Cardiac septum (tissue), 1 donor: ENCODE measurements at regions of chr11 and their contacts with region 1.

Region 1: GRCh38 chr11:130894322-130895025 is 21.8 kb downstream of the SNX19 start:
- DNase-seq: peak; percentile 82

Region 2: DNA sequence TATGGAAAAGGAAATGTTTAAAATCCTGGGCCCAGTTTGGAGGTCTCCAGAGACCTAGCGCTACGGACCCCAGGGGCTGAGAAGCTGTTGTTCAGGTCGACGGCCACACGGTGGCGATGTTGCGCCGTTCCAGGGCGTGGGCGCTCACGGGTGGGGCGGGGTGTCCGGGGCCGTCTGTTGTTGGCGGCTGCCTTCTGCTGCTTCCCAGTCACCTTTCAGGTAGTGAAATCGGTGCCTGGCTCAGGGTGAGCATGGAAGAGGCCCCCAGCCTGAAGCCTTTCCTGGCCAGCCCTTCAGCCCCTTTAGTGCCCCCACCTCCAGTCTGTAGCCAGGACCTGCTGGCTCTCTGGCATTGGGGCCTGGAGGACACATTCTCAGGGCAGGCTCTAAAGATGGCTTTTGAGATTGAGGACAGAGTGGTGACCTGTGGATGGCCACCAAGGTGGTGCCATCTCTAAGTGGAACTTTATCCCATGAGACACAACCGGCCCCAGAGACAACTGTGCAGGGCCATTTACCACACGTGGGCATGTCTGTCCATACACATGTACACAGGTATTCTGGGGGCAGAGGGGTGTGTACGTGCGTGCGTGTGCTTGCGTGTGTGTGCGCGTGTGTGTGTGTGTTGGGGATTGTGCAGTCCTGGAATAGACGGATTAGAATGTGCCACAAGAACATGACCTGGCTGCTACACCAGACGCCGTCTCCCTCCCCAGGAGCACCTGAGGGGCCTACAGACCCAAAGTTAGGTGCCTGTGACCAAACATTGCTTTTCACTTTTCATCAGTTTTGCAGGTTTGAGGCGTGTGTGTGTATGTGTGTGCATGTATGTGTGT is 681.1 kb before region 1 on chr11:
- intact Hi-C with region 1: loop called (anchors 10 kb)
- DNase-seq: peak; percentile 89

Region 3: GRCh38 chr11:130314750-130315285 is 579.7 kb before region 1 on chr11 and contains the start of gene ZBTB44:
- intact Hi-C with region 1: loop called (anchors 10 kb)
- DNase-seq: peak; percentile 98
- total RNA-seq, gene ZBTB44: 37.0 TPM

Region 4: DNA sequence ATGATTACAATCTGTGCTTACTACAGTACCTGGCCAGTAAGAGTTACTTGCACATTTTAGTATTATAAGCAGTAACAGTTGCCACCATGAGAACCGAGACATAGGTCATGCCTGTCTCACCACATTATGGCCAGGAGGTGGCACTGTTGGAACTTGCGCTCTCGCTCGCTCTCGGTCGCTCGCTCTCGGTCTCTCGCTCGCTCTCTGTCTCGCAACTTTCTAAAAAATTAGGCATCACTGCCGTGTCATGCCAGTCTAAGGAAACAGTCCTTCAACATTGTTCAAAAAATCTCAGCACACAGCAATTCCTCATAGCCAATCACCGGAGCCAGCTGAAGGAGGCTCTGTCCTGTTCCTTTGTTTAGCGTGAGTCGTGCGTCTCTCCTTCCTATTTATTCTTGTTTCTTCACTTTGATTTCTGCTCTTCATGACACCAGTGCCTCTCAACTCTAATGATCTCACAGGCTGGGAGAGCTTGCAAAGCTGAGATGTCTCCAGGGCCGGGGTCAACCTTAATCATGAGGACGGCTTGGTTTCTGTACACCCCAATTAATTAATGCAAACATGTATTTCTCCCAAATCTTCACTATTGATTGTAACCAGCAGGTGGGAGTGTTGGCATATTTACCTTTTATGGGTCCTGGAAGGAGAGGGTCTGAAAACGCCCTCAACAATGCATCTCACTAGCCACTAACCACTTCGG is 459.8 kb before region 1 on chr11:
- intact Hi-C with region 1: loop called (anchors 2 kb)
- DNase-seq: peak; percentile 87

Region 5: GRCh38 chr11:130744794-130745193 is 149.7 kb before region 1 on chr11:
- intact Hi-C with region 1: no loop called
- DNase-seq: no peak

Region 6: GRCh38 chr11:130861902-130862860 is 32.3 kb before region 1 on chr11:
- intact Hi-C with region 1: loop called (anchors 1 kb)
- DNase-seq: peak; percentile 96

Region 7: GRCh38 chr11:130979386-130979972 is 85.0 kb after region 1 on chr11:
- intact Hi-C with region 1: no loop called
- DNase-seq: no peak